SK-N-SH (cell line): ENCODE measurements at regions of chr2 and their contacts with region 1.

Region 1: GRCh38 chr2:120693121-120693520 is 42.5 kb upstream of the GLI2 start:
- DNase-seq: no peak
- H3K4me3 ChIP-seq: no peak overlapping the region
- H3K27ac ChIP-seq: no peak overlapping the region
- H3K4me1 ChIP-seq: peaks cover 0 to 2% of the 10 kb centered on the region in 2 experiments; a peak in 1 of 4 replicates
- H3K27me3 ChIP-seq: no peaks in the 10 kb centered on the region; the same call in 1 of the 2 replicates
- CTCF ChIP-seq: no peak
- EP300 ChIP-seq: no peak
- RAD21 ChIP-seq: no peak

Region 2: GRCh38 chr2:120647491-120647890 is 45.6 kb before region 1 on chr2:
- CTCF ChIA-PET with region 1: no interaction called
- POLR2A ChIA-PET with region 1: no interaction called
- DNase-seq: no peak
- H3K4me3 ChIP-seq: no peak overlapping the region
- H3K27ac ChIP-seq: no peak overlapping the region
- H3K4me1 ChIP-seq: no peaks in the 10 kb centered on the region
- H3K27me3 ChIP-seq: peaks cover 5% of the 10 kb centered on the region; the same call in 1 of the 2 replicates
- CTCF ChIP-seq: no peak
- EP300 ChIP-seq: no peak
- RAD21 ChIP-seq: no peak

Region 3: DNA sequence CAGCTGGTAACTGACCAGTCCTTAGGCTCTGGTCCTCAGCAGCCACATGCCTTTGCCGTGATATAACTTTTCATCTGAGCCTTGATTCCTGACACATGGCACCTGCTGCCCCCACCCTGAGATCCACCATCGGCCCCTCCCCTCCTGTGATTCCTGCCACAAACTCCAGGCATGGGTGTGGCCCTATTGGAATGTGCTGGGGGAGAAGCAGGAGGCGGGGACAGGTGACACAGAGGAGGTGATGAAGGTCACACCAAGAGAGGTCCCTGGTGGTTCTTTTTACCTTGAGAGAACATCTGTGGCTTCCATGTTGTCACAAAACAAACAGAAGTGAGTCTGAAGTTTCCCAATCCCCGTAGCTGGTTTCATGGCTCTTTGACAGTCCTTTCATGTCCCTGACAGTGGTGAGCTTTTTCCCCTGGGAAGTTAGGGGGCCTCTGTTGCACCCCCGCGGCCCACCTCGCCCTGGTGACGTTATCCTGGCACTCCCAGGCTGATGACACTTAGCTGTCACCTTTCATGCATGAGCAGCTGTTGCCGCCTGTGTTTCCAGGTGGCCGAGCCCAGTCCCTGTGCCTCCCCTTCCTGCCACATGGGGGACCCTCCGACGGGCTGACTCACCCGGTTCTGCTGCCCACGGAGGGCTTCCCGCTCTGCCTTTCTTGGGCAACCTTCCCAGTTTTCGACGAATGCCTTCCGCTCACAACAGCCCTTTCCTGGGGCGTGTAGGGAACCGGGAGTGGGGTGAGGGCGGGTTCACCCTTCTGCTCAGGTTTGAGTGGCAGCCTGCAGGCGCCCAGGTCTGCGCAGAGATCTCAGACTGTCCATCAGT is 23.8 kb before region 1 on chr2:
- CTCF ChIA-PET with region 1: no interaction called
- POLR2A ChIA-PET with region 1: no interaction called
- DNase-seq: peak; percentile 75
- H3K4me3 ChIP-seq: peak overlapping the region in 1 of 2 experiments; percentile 6; a peak in 1 of 4 replicates
- H3K27ac ChIP-seq: no peak overlapping the region
- H3K4me1 ChIP-seq: peaks cover 0 to 12% of the 10 kb centered on the region in 2 experiments; a peak in 1 of 4 replicates
- H3K27me3 ChIP-seq: no peaks in the 10 kb centered on the region; the same call in 1 of the 2 replicates
- CTCF ChIP-seq: no peak
- EP300 ChIP-seq: no peak
- RAD21 ChIP-seq: no peak

Region 4: GRCh38 chr2:120703330-120703994 is 10.3 kb after region 1 on chr2:
- CTCF ChIA-PET with region 1: interaction called, 26 read pairs
- POLR2A ChIA-PET with region 1: no interaction called
- DNase-seq: no peak
- H3K4me3 ChIP-seq: no peak overlapping the region
- H3K27ac ChIP-seq: no peak overlapping the region
- H3K4me1 ChIP-seq: peaks cover 0 to 18% of the 10 kb centered on the region in 2 experiments; a peak in 1 of 4 replicates
- H3K27me3 ChIP-seq: no peaks in the 10 kb centered on the region
- CTCF ChIP-seq: no peak
- EP300 ChIP-seq: no peak
- RAD21 ChIP-seq: no peak

Region 5: DNA sequence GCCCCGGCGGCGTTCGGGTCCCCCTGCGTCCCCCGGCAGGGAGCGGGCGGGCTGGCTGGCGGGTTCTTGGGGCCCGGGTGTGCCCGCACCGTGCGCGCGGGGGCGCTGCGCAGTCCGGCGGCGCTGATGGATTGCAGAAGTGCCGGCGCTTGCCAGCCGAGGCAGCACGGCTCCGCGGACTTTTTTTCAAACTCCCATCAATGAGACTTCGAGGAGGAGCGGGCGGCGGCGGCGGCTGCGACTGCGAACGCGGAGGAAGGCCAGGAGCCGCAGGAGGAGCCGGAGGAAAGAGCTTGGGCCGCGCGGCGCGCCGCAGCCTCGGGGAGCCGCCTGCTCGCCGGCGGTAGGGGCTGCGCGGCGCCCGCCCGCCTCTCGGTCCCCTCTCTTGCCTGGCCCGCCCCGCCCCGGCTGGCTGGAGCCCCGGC is 42.6 kb after region 1 on chr2 and contains the start of gene GLI2:
- CTCF ChIA-PET with region 1: interaction called, 20 read pairs
- POLR2A ChIA-PET with region 1: no interaction called
- DNase-seq: peak; percentile 92
- H3K4me3 ChIP-seq: peak within 1 kb of the TSS; percentile 80 to 88
- H3K27ac ChIP-seq: peak within 1 kb of the TSS; percentile 74 to 81
- H3K4me1 ChIP-seq: peaks cover 11 to 22% of the 10 kb centered on the region in 2 experiments; a peak in 3 of 4 replicates
- H3K27me3 ChIP-seq: no peaks in the 10 kb centered on the region
- CTCF ChIP-seq: peak; percentile 78
- EP300 ChIP-seq: no peak
- RAD21 ChIP-seq: peak; percentile 66
- polyA plus RNA-seq, gene GLI2: 2.0 and 3.4 TPM in 2 replicates

Region 6: DNA sequence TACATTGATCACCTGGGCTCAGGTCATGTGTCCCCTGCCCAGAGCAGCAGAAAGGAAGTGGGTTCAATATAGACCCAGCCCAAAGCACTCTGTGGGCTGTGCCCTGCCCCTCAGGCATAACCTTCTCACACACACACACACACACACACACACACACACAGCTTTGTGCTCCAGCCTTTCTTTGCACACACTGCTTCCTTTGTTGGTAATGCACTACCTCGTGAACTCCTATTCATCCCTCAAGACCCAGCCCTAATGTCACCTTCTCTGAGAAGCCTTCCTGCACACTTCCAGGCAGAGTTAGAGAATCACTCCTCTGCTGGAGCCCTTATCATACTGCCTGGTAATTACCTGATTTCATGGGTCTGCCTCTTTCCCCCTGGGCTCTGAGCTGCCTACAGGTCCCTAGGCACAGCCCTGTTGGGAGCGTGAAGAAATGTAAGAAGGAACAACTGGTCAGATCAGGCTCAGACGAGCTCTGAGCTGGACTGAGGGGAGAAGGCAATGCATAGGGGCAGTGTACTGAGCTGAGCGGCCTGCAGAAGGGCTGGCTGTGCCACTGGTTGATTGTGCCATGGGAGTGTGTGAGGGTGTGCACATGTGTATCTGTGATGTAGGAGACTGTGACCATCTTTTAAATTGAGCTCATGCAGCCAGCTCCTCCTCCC is 252.8 kb after region 1 on chr2:
- CTCF ChIA-PET with region 1: interaction called, 12 read pairs
- POLR2A ChIA-PET with region 1: no interaction called
- DNase-seq: no peak
- H3K4me3 ChIP-seq: no peak overlapping the region
- H3K27ac ChIP-seq: no peak overlapping the region
- H3K4me1 ChIP-seq: peaks cover 0 to 47% of the 10 kb centered on the region in 2 experiments; a peak in 1 of 4 replicates
- H3K27me3 ChIP-seq: no peaks in the 10 kb centered on the region
- CTCF ChIP-seq: no peak
- EP300 ChIP-seq: no peak
- RAD21 ChIP-seq: no peak

Region 7: DNA sequence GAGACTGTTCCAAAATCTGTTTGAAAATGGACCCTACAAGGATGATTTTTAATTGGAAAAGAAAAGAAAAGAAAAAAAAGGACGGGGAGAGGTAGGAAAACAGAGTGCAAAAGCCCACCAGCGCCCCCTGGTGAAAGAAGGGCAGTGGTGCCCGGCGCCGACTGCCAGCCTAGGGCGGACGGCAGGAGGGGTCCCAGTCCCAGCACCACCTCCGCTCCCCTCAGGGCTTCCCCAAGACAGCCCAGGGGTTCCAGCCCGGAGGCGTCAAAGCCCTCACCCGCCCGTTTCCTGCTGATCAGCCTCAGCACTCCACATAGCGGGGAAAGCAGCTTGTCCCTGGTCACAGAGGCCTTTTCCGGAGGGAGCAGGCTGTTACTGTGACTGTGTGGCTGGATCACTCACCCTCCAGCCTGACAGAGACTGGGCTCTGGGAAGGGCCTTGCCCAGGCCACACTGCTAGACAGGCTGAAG is 377.9 kb after region 1 on chr2:
- CTCF ChIA-PET with region 1: interaction called, 408 read pairs
- POLR2A ChIA-PET with region 1: interaction called, 4 read pairs
- DNase-seq: peak; percentile 90
- H3K4me3 ChIP-seq: peak overlapping the region in 1 of 2 experiments; percentile 11; a peak in 1 of 4 replicates
- H3K27ac ChIP-seq: no peak overlapping the region
- H3K4me1 ChIP-seq: peaks cover 0 to 19% of the 10 kb centered on the region in 2 experiments; a peak in 1 of 4 replicates
- H3K27me3 ChIP-seq: peaks cover 12% of the 10 kb centered on the region; the same call in 1 of the 2 replicates
- CTCF ChIP-seq: peak; percentile 97
- EP300 ChIP-seq: no peak
- RAD21 ChIP-seq: peak; percentile 91